CD14-positive monocyte (primary cell): ENCODE measurements at regions of chr15 and their contacts with region 1.

Region 1: GRCh38 chr15:72473614-72474465 is at the start of gene ARIH1:
- DNase-seq: peak; percentile 93 to 96 (median 96)
- H3K4me3 ChIP-seq: peak within 1 kb of the TSS; percentile 74 to 94 (median 89)
- H3K4me3 Mint-ChIP-seq: peak within 1 kb of the TSS; percentile 94 to 98
- H3K27ac ChIP-seq: peak within 1 kb of the TSS; percentile 99
- H3K27ac Mint-ChIP-seq: peak within 1 kb of the TSS; percentile 98 to 99 (median 99)
- H3K4me1 ChIP-seq: peaks cover 17 to 39% of the 10 kb centered on the region in 2 donors
- H3K4me1 Mint-ChIP-seq: peaks cover 31% of the 10 kb centered on the region
- H3K27me3 ChIP-seq: no peaks in the 10 kb centered on the region
- H3K27me3 Mint-ChIP-seq: peaks cover 0 to 1% (median 0%) of the 10 kb centered on the region in 3 donors
- CTCF ChIP-seq: peak; percentile 20
- polyA plus RNA-seq, gene ARIH1: 13.5 to 47.2 (median 14.4) TPM

Region 2: GRCh38 chr15:71891026-71891425 is 582.8 kb before region 1 on chr15:
- intact Hi-C with region 1: no loop called
- DNase-seq: no peak
- H3K4me3 ChIP-seq: no peak overlapping the region
- H3K4me3 Mint-ChIP-seq: no peak overlapping the region
- H3K27ac ChIP-seq: no peak overlapping the region
- H3K27ac Mint-ChIP-seq: no peak overlapping the region
- H3K4me1 ChIP-seq: no peaks in the 10 kb centered on the region
- H3K4me1 Mint-ChIP-seq: no peaks in the 10 kb centered on the region
- H3K27me3 ChIP-seq: no peaks in the 10 kb centered on the region
- H3K27me3 Mint-ChIP-seq: no peaks in the 10 kb centered on the region
- CTCF ChIP-seq: no peak

Region 3: GRCh38 chr15:72369964-72370363 is 103.9 kb before region 1 on chr15:
- intact Hi-C with region 1: loop called (anchors 2 to 5 kb)
- DNase-seq: peak; percentile 74 to 92 (median 86)
- H3K4me3 ChIP-seq: peak overlapping the region in 1 of 3 experiments; percentile 62
- H3K4me3 Mint-ChIP-seq: peak overlapping the region in 1 of 2 donors; percentile 19
- H3K27ac ChIP-seq: peak overlapping the region; percentile 76 to 85
- H3K27ac Mint-ChIP-seq: peak overlapping the region; percentile 91 to 95 (median 92)
- H3K4me1 ChIP-seq: peaks cover 92 to 98% of the 10 kb centered on the region in 2 donors
- H3K4me1 Mint-ChIP-seq: peaks cover 96% of the 10 kb centered on the region
- H3K27me3 ChIP-seq: no peaks in the 10 kb centered on the region
- H3K27me3 Mint-ChIP-seq: no peaks in the 10 kb centered on the region
- CTCF ChIP-seq: no peak

Region 4: GRCh38 chr15:72375847-72376581 is 97.8 kb before region 1 on chr15 and contains the start of gene HEXA:
- intact Hi-C with region 1: loop called (anchors 2 to 5 kb)
- DNase-seq: peak; percentile 76 to 87 (median 86)
- H3K4me3 ChIP-seq: peak within 1 kb of the TSS; percentile 71 to 79 (median 72)
- H3K4me3 Mint-ChIP-seq: peak within 1 kb of the TSS; percentile 93 to 98
- H3K27ac ChIP-seq: peak within 1 kb of the TSS; percentile 97 to 99
- H3K27ac Mint-ChIP-seq: peak within 1 kb of the TSS; percentile 94 to 99 (median 97)
- H3K4me1 ChIP-seq: peaks cover 51 to 64% of the 10 kb centered on the region in 2 donors
- H3K4me1 Mint-ChIP-seq: peaks cover 64% of the 10 kb centered on the region
- H3K27me3 ChIP-seq: no peaks in the 10 kb centered on the region
- H3K27me3 Mint-ChIP-seq: no peaks in the 10 kb centered on the region
- CTCF ChIP-seq: no peak
- polyA plus RNA-seq, gene HEXA: 164 to 192 (median 186) TPM

Region 5: DNA sequence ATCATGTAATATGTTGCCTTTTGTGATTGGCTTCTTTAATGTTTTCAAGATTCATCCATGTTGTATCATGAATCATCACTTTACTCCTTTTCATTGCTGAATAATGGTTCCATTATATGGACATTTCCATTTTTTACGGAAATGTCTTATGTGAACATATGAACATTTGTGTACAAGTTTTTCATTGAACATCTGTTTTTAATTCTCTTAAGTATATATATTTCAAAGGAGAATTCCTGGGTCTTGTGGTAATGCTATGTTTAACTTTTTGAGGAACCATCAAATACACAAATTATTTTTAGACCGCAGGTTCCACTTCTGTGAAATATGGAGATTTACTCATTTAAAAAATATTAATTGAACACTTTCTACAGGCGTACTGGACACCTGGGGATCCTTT is 85.9 kb after region 1 on chr15:
- intact Hi-C with region 1: loop called in 1 of 2 experiments (anchors 10 kb)
- DNase-seq: no peak
- H3K4me3 ChIP-seq: no peak overlapping the region
- H3K4me3 Mint-ChIP-seq: no peak overlapping the region
- H3K27ac ChIP-seq: peak overlapping the region in 1 of 2 donors; percentile 27
- H3K27ac Mint-ChIP-seq: peak overlapping the region in 1 of 7 donors; percentile 50
- H3K4me1 ChIP-seq: peaks cover 41 to 48% of the 10 kb centered on the region in 2 donors
- H3K4me1 Mint-ChIP-seq: peaks cover 49% of the 10 kb centered on the region
- H3K27me3 ChIP-seq: no peaks in the 10 kb centered on the region
- H3K27me3 Mint-ChIP-seq: no peaks in the 10 kb centered on the region
- CTCF ChIP-seq: no peak

Region 6: DNA sequence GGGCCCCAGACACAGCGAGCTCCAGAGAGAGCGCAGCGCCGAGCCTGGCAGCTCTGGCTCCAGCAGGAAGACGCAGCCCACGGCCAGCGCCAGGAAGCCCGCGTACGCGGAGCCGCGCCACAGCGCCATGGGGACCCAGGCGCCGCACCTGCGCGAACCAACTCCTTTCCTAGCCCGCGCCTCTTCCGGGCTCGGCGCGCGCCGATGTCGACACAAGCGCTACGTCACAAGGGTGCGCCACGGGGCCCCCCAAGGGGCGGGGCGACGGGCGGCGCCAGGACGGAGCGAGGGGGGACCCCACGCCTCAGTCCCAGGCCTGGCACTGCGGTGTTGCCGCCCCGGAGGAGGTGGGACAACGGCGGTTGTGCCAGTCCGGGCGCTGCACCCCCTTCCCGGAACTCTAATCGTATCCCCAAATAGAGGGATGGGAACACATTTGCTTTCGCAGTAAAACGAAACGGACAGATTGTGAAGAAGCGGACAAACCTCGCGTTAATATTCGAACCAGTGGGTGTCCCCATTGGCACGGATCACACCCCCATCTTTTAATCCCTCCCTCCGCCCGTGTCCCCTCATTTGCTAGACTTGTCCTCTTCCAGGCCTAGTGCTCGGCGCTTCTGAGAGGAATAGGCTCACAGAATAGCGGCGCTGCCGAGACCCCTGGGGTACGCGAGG is 309.9 kb after region 1 on chr15 and contains the start of gene ADPGK:
- intact Hi-C with region 1: loop called (anchors 10 kb)
- DNase-seq: peak; percentile 83 to 95 (median 92)
- H3K4me3 ChIP-seq: peak within 1 kb of the TSS; percentile 73 to 91 (median 88)
- H3K4me3 Mint-ChIP-seq: peak within 1 kb of the TSS; percentile 88 to 97
- H3K27ac ChIP-seq: peak within 1 kb of the TSS; percentile 97 to 100
- H3K27ac Mint-ChIP-seq: peak within 1 kb of the TSS; percentile 97 to 100 (median 99)
- H3K4me1 ChIP-seq: peaks cover 30 to 39% of the 10 kb centered on the region in 2 donors
- H3K4me1 Mint-ChIP-seq: peaks cover 45% of the 10 kb centered on the region
- H3K27me3 ChIP-seq: no peaks in the 10 kb centered on the region
- H3K27me3 Mint-ChIP-seq: peaks cover 0 to 2% (median 1%) of the 10 kb centered on the region in 3 donors
- CTCF ChIP-seq: no peak
- polyA plus RNA-seq, gene ADPGK: 138 to 283 (median 152) TPM